GM12878 (cell line): ENCODE measurements at regions of chr18 and their contacts with region 1.

Region 1: DNA sequence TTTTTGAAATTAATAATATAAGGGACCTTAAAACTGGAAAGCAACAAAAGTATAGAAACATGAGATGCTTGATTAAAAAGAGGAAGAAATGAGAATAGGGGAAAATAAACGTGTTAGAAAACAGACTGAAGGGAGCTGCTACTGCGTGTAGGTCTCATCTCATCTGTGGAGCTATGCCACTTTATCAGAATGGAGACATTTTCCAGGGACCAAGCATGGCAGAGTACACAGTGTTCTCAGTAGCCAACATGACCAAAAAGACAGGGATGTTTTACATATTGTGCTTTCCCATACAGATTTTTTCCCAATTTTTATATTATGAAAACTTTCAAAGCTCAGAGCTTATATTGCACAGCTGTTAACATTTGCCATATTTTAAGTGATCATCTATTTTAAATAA is 23.1 kb downstream of the CEP192 start:
- DNase-seq: no peak
- ATAC-seq: no peak
- H3K4me3 ChIP-seq: no peak overlapping the region
- H3K27ac ChIP-seq: no peak overlapping the region
- H3K4me1 ChIP-seq: peaks cover 4% of the 10 kb centered on the region; the same call in 1 of the 2 replicates
- H3K27me3 ChIP-seq: no peaks in the 10 kb centered on the region
- CTCF ChIP-seq: no peak
- EP300 ChIP-seq: no peak
- POLR2A ChIP-seq: no peak
- RAD21 ChIP-seq: no peak

Region 2: GRCh38 chr18:13003466-13003896 is 10.8 kb before region 1 on chr18:
- CTCF ChIA-PET with region 1: interaction called, 11 read pairs
- POLR2A ChIA-PET with region 1: interaction called, 3 read pairs
- RAD21 ChIA-PET with region 1: interaction called, 3 read pairs
- SMC1A ChIA-PET with region 1: interaction called, 6 read pairs
- in situ Hi-C with region 1: no loop called
- intact Hi-C with region 1: no loop called
- DNase-seq: no peak
- ATAC-seq: peak; percentile 83
- H3K4me3 ChIP-seq: no peak overlapping the region
- H3K27ac ChIP-seq: no peak overlapping the region
- H3K4me1 ChIP-seq: peaks cover 20% of the 10 kb centered on the region
- H3K27me3 ChIP-seq: no peaks in the 10 kb centered on the region
- CTCF ChIP-seq: peak; percentile 52 to 57 (median 57); a peak in 5 of 6 replicates
- EP300 ChIP-seq: no peak
- POLR2A ChIP-seq: no peak
- RAD21 ChIP-seq: peak; percentile 37; the same call in 1 of the 2 replicates

Region 3: DNA sequence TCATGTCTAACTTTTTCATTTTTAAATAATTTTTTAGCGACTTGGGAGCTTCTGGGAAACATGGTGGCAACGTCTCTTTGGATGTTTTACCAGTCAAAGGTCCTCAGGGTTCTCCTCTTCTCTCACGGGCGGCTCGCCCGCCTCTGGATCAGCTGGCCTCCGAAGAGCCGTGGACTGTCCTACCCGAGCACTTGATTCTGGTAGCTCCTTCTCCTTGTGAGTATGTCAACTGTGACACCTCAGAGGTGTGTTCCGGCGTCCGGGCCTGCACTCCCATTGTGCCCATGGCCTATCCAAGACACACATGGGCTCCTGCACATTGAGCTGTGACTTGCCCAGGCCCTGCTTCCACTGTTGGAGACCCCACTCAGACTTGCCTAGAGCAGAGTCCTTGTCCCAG is 81.2 kb after region 1 on chr18:
- CTCF ChIA-PET with region 1: no interaction called
- POLR2A ChIA-PET with region 1: no interaction called
- RAD21 ChIA-PET with region 1: no interaction called
- SMC1A ChIA-PET with region 1: no interaction called
- in situ Hi-C with region 1: no loop called
- intact Hi-C with region 1: no loop called
- DNase-seq: no peak
- ATAC-seq: no peak
- H3K4me3 ChIP-seq: no peak overlapping the region
- H3K27ac ChIP-seq: no peak overlapping the region
- H3K4me1 ChIP-seq: no peaks in the 10 kb centered on the region
- H3K27me3 ChIP-seq: no peaks in the 10 kb centered on the region
- CTCF ChIP-seq: no peak
- EP300 ChIP-seq: no peak
- POLR2A ChIP-seq: no peak
- RAD21 ChIP-seq: no peak